Dendritic cell treated with granulocyte-macrophage colony-stimulating factor and Interleukin-4, amounts not matched to agents 40 ng/mL and 50 ng/mL, for 4 days (primary cell): ENCODE measurements at regions of chr2 and their contacts with region 1.

Region 1: DNA sequence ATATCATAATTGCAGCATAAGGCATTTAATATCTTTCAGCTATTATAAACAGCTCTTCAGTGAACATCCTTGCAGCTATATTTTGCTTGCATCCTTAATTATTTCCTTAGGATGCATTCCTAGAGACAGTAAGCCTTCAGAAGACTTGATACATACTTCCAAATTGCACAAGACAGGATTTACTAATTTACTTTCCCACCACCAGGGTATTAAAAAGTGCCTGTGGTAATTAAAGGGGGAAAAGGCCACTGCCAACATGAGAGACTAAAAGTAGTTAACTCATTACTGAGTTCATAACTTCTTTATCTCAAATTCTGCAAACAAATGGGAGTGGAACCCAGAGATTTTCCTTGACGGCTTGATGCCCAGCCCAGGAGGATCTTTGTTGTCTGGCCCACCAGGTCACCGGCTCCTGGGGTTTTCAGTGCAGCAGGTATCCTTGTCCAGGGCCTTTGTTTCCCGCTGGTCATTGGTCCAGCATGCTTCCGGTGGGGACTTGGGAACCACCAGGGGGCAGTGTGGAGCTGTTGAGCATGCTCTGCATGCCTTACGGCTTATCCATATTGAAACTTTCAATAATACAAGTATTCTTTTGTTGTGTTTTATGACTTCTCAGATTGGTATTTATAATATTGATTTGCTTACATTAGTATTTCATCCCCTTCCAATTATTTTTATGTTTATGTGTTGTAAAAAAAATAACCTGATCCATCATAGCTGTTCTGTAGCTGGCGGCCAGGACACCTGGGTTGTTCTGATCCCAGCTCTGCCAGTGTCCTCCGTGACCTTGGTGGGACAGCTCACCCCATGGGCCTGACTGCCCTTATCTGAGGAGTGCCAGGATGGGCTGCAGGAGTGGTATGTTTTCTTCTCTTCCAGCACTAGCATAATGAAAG is 61.4 kb downstream of the TGOLN2 start:
- H3K4me3 Mint-ChIP-seq: no peak overlapping the region
- H3K27ac Mint-ChIP-seq: no peak overlapping the region
- H3K4me1 Mint-ChIP-seq: no peaks in the 10 kb centered on the region
- H3K27me3 Mint-ChIP-seq: peaks cover 16% of the 10 kb centered on the region

Region 2: DNA sequence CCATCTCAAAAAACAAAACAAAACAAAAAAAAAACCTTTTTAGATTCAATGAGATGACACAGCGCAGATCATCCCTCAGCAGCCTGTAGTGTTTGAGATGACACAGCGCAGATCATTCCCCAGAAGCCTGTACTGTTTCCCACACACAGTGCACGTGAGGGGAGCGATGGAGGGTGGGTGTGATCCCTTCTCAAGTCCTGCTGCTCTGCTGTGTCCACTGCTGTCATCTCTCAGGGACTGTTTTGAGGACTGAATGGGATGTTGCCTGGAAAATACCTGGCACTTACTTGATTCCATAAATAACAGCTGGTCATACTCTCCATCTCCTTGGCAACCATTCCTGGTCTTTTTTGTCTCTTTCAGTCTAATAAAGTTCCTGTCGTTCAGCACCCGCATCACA is 35.7 kb after region 1 on chr2:
- intact Hi-C with region 1: loop called (anchors 1 kb)
- H3K4me3 Mint-ChIP-seq: no peak overlapping the region
- H3K27ac Mint-ChIP-seq: no peak overlapping the region
- H3K4me1 Mint-ChIP-seq: peaks cover 6% of the 10 kb centered on the region
- H3K27me3 Mint-ChIP-seq: peaks cover 25% of the 10 kb centered on the region

Region 3: GRCh38 chr2:85445316-85446295 is 179.2 kb after region 1 on chr2:
- intact Hi-C with region 1: no loop called
- H3K4me3 Mint-ChIP-seq: no peak overlapping the region
- H3K27ac Mint-ChIP-seq: no peak overlapping the region
- H3K4me1 Mint-ChIP-seq: peaks cover 36% of the 10 kb centered on the region
- H3K27me3 Mint-ChIP-seq: no peaks in the 10 kb centered on the region